Left ventricle myocardium superior (tissue), 1 donor: ENCODE measurements at regions of chr17 and their contacts with region 1.

Region 1: GRCh38 chr17:44066204-44066930 is at the start of gene LSM12:
- DNase-seq: peak; percentile 95
- ATAC-seq: peak; percentile 82
- total RNA-seq, gene LSM12: 58.2 TPM

Region 2: DNA sequence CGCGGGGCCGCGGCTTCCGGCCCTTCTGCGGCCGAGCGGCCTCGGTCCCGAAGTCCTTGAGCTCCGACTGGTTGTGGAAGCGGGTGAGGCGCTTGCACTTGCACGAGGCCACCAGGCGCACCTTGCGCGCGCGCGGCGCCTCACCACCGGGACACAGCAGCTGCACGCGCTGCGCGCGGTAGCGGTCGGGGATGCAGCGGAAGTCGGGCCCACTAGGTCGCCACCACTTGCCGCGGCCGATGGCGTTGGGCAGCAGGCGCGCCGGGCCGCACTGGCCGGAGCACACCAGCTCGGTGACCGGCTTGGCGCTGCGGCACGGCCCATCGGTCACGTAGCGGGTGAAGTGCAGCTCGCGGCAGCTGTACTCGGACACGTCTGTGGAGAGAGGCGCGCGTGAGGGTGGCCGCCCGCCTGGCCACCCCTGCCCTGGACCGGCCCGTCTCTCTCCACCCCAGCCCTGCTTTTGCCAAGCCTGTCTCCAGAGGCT is 310.9 kb before region 1 on chr17:
- intact Hi-C with region 1: no loop called
- DNase-seq: peak; percentile 52
- ATAC-seq: peak; percentile 40

Region 3: DNA sequence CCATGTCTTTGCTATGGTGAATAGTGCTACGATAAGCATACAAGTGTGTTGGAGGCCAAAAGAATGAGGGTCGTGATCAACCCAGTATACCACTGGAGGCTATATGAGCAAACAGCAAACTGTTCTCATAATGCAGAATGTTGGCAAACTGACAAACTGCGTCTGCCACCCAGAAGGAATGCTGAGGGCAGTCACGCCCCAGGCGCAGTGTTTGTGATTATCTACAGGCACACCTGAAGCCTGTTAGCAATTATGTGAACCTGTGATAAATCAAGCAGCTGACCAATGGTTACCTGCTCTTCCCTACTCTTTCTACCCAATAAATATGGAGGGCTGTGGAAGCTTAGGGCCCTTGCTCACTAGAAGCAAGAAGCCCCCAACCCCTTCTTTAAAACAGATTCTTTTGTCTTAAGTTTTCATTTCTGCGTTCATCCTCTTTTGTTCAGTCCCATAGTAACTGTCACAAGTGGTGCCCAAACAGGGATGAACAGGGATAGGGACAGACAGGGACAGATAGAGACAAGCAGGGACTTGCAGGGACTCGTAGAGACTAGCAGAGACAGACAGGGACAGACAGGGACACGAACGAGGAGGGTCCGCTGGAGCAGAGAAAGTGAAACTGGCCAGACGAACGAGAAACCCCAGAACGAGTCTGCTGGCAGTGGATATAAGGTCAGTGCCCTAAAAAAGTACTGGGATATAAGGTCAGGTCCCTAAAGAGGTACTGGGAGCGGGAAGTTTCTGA is 194.2 kb before region 1 on chr17:
- intact Hi-C with region 1: no loop called
- DNase-seq: peak; percentile 48
- ATAC-seq: peak; percentile 24

Region 4: DNA sequence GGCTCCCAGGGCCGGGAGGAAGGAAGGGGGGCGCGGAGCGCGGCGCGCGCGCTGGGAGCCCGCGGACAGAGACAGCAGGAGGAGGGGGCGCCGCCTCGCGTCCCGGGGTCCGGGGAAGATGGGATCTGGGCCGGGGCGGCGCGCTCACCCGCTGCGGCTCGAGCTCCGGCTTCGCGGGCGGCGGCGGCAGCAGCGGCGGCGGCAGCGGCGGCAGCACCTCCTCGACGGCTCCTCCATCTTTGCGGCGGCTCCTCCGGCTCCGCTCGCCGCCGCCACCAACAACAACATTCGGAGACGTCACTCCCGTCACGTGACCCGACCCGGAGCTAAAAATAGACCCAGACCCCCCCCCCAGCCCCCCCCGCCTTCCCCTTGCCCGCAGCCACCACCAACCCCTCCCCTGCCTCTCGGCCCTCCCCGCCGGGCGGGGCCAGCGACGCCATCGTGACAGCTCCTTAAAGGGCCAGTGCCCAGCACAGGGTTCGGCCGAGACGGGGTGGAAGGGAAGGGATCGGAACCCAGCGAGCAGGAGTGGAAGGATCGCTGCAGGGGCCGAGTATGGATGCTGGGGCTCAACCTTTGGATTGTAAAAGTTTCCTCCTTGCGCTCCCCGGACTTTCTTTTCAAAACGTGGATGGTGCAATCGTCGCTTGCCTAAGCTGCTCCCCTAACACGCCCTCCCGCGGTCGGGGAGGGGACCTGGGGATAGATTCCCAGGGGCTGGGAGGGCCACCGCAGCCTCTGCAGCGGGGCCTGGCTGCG is 57.2 kb after region 1 on chr17 and contains the start of gene HDAC5:
- intact Hi-C with region 1: loop called (anchors 10 kb)
- DNase-seq: peak; percentile 98
- ATAC-seq: peak; percentile 97
- total RNA-seq, gene HDAC5: 81.4 TPM

Region 5: GRCh38 chr17:44758414-44759085 is 692.2 kb after region 1 on chr17 and contains the start of gene ADAM11:
- intact Hi-C with region 1: no loop called
- DNase-seq: no peak
- ATAC-seq: peak; percentile 64
- total RNA-seq, gene ADAM11: 27.2 TPM